HCT116 (cell line): ENCODE measurements at regions of chr1 and their contacts with region 1.

Region 1: DNA sequence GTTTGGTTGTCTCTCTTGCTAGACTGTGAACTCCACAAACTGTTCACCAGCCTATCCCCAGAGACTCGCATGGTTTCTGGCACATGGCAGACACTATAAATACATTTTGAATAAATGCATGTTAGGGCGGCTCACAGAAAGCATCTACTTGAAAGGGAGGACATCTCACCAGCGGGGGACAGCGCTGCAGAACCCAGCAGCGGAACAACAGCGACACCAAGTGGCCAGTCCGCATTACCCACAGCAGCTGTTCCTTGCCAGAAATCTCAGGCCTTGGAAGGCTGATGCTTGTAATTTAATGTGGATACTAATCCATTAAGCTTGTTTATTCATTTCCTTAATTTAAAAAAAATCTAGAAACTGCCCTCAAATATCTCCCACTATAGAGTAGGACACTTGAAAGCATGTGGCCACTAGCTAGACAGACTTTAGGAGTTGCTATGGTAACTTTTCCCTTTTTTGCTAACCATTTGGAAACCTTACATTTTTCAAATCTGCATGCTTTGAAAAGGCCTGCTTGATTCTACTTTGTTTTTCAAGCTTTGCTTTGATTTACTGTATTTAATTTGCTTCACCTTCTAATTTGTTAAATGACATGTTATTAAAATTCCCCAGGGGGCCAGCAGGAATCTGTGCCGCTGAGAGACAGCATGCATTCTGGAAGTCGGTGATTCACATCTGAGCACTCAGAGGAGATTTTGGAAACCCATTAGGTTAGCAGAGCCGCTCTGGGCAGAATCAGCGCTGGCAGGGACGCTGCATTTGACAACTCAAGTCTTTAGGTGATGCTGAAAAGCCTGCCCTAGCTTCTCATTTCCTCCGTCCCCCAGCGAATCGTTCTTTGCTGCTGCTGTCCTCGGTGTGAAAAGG is 63.5 kb upstream of the SSX2IP start:
- DNase-seq: peak; percentile 43
- ATAC-seq: peak; percentile 96
- H3K4me3 ChIP-seq: no peak overlapping the region
- H3K27ac ChIP-seq: no peak overlapping the region
- H3K4me1 ChIP-seq: 0 out of 4 replicates have a peak, but pooled peaks cover 0 to 4% of the 10 kb centered on the region in 2 experiments
- H3K27me3 ChIP-seq: no peaks in the 10 kb centered on the region
- CTCF ChIP-seq: peak; percentile 89 to 99 (median 96)
- POLR2A ChIP-seq: no peak
- RAD21 ChIP-seq: peak; percentile 98

Region 2: GRCh38 chr1:83905315-83905907 is 848.3 kb before region 1 on chr1:
- CTCF ChIA-PET with region 1: interaction called, 5 read pairs
- POLR2A ChIA-PET with region 1: no interaction called
- RAD21 ChIA-PET with region 1: no interaction called
- intact Hi-C with region 1: loop called (anchors 5 kb)
- DNase-seq: no peak
- ATAC-seq: no peak
- H3K4me3 ChIP-seq: no peak overlapping the region
- H3K27ac ChIP-seq: no peak overlapping the region
- H3K4me1 ChIP-seq: peaks cover 0 to 12% of the 10 kb centered on the region in 2 experiments; a peak in 2 of 4 replicates
- H3K27me3 ChIP-seq: no peaks in the 10 kb centered on the region
- CTCF ChIP-seq: peak; percentile 37 to 52 (median 42); a peak in 4 of 6 replicates
- POLR2A ChIP-seq: no peak
- RAD21 ChIP-seq: peak; percentile 48

Region 3: GRCh38 chr1:83931658-83932253 is 822.0 kb before region 1 on chr1:
- CTCF ChIA-PET with region 1: interaction called, 3 read pairs
- POLR2A ChIA-PET with region 1: no interaction called
- RAD21 ChIA-PET with region 1: no interaction called
- intact Hi-C with region 1: loop called (anchors 10 kb)
- DNase-seq: peak; percentile 39
- ATAC-seq: peak; percentile 88
- H3K4me3 ChIP-seq: no peak overlapping the region
- H3K27ac ChIP-seq: no peak overlapping the region
- H3K4me1 ChIP-seq: peaks cover 0 to 4% of the 10 kb centered on the region in 2 experiments; a peak in 1 of 4 replicates
- H3K27me3 ChIP-seq: no peaks in the 10 kb centered on the region
- CTCF ChIP-seq: peak; percentile 68 to 82 (median 81); a peak in 5 of 6 replicates
- POLR2A ChIP-seq: no peak
- RAD21 ChIP-seq: peak; percentile 88

Region 4: GRCh38 chr1:84442256-84442655 is 311.5 kb before region 1 on chr1:
- CTCF ChIA-PET with region 1: interaction called, 4 read pairs
- POLR2A ChIA-PET with region 1: no interaction called
- RAD21 ChIA-PET with region 1: no interaction called
- intact Hi-C with region 1: loop called (anchors 1 kb)
- DNase-seq: peak; percentile 67
- ATAC-seq: peak; percentile 93
- H3K4me3 ChIP-seq: no peak overlapping the region
- H3K27ac ChIP-seq: no peak overlapping the region
- H3K4me1 ChIP-seq: peaks cover 6 to 20% of the 10 kb centered on the region in 2 experiments; a peak in 3 of 4 replicates
- H3K27me3 ChIP-seq: no peaks in the 10 kb centered on the region
- CTCF ChIP-seq: peak; percentile 21 to 76 (median 57); a peak in 5 of 6 replicates
- POLR2A ChIP-seq: no peak
- RAD21 ChIP-seq: peak; percentile 85

Region 5: DNA sequence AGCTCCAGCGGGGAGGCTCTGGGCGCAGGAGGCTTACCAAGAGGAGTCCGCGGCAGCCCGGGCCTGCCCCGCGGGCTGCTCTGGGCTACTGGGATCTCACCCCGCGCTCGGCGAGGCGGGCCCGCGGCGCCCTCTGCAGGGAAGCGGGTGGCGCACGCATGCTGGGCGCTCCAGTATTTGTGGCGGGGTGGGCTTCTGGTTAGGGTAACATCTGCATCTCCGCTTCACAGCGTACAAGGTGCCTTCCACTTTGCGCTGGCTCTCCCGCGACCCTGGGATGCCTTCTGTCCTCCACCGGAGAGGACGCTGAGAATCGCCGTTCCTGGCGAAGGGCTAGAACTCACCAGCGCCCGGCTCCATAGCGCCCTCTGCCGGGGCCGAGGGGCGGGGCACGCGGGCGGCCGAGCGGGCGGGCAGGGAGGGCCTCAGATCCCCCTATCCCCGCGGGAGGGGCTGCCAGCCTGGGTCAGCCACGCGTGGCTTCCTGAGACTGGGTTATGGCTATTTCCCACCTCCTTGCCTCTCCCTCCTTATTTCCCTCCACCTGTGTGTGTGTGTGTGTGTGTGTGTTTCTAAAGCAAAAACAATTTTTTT is 132.9 kb before region 1 on chr1:
- CTCF ChIA-PET with region 1: no interaction called
- POLR2A ChIA-PET with region 1: no interaction called
- RAD21 ChIA-PET with region 1: no interaction called
- intact Hi-C with region 1: loop called (anchors 5 kb)
- DNase-seq: peak; percentile 71
- ATAC-seq: peak; percentile 93
- H3K4me3 ChIP-seq: peak overlapping the region; percentile 47 to 62
- H3K27ac ChIP-seq: peak overlapping the region; percentile 91
- H3K4me1 ChIP-seq: peaks cover 18 to 25% of the 10 kb centered on the region in 2 experiments
- H3K27me3 ChIP-seq: no peaks in the 10 kb centered on the region
- CTCF ChIP-seq: peak; percentile 72 to 99 (median 92)
- POLR2A ChIP-seq: no peak
- RAD21 ChIP-seq: peak; percentile 87

Region 6: GRCh38 chr1:84668185-84668584 is 85.6 kb before region 1 on chr1:
- CTCF ChIA-PET with region 1: no interaction called
- POLR2A ChIA-PET with region 1: no interaction called
- RAD21 ChIA-PET with region 1: no interaction called
- intact Hi-C with region 1: loop called (anchors 5 kb)
- DNase-seq: no peak
- ATAC-seq: peak; percentile 72
- H3K4me3 ChIP-seq: no peak overlapping the region
- H3K27ac ChIP-seq: no peak overlapping the region
- H3K4me1 ChIP-seq: no peaks in the 10 kb centered on the region
- H3K27me3 ChIP-seq: no peaks in the 10 kb centered on the region
- CTCF ChIP-seq: peak; percentile 24 to 41 (median 30); a peak in 3 of 6 replicates
- POLR2A ChIP-seq: no peak
- RAD21 ChIP-seq: peak; percentile 55

Region 7: GRCh38 chr1:84928979-84929378 is 175.2 kb after region 1 on chr1:
- CTCF ChIA-PET with region 1: no interaction called
- POLR2A ChIA-PET with region 1: no interaction called
- RAD21 ChIA-PET with region 1: no interaction called
- intact Hi-C with region 1: no loop called
- DNase-seq: no peak
- ATAC-seq: no peak
- H3K4me3 ChIP-seq: no peak overlapping the region
- H3K27ac ChIP-seq: no peak overlapping the region
- H3K4me1 ChIP-seq: no peaks in the 10 kb centered on the region
- H3K27me3 ChIP-seq: no peaks in the 10 kb centered on the region
- CTCF ChIP-seq: no peak
- POLR2A ChIP-seq: no peak
- RAD21 ChIP-seq: no peak

Region 8: GRCh38 chr1:85203573-85204169 is 449.9 kb after region 1 on chr1:
- CTCF ChIA-PET with region 1: no interaction called
- POLR2A ChIA-PET with region 1: no interaction called
- RAD21 ChIA-PET with region 1: no interaction called
- intact Hi-C with region 1: no loop called
- DNase-seq: no peak
- ATAC-seq: no peak
- H3K4me3 ChIP-seq: no peak overlapping the region
- H3K27ac ChIP-seq: no peak overlapping the region
- H3K4me1 ChIP-seq: peaks cover 6 to 16% of the 10 kb centered on the region in 2 experiments
- H3K27me3 ChIP-seq: no peaks in the 10 kb centered on the region
- CTCF ChIP-seq: no peak
- POLR2A ChIP-seq: no peak
- RAD21 ChIP-seq: no peak